AG04449 (cell line): ENCODE measurements at regions of chr1 and their contacts with region 1.

Region 1: GRCh38 chr1:52296345-52296744 is 69.7 kb downstream of the CC2D1B start:
- DNase-seq: peak; percentile 12
- H3K4me3 ChIP-seq: no peak overlapping the region
- CTCF ChIP-seq: peak; percentile 59

Region 2: GRCh38 chr1:52141513-52142219 is 154.7 kb before region 1 on chr1 and contains the start of gene ZFYVE9:
- CTCF ChIA-PET with region 1: interaction called, 28 read pairs
- POLR2A ChIA-PET with region 1: no interaction called
- DNase-seq: no peak
- H3K4me3 ChIP-seq: peak within 1 kb of the TSS; percentile 79
- CTCF ChIP-seq: peak; percentile 79

Region 3: DNA sequence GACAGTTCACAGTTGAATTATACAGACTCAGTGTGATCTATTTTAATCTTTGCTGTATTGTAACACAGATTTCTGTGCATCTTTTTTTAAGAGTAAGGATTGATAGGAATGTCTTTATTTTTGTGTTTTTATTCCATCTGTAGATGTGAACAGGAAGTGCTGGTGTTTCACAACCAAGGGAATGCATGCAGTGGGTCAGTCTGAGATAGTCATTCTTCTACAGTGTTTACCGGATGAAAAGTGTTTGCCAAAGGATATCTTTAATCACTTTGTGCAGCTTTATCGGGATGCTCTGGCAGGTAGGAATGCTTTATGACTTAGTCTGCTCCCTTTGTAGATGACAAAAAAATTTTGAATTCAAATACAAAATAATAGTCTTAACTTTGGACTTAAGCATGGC is 14.8 kb before region 1 on chr1:
- CTCF ChIA-PET with region 1: interaction called, 16 read pairs
- POLR2A ChIA-PET with region 1: no interaction called
- DNase-seq: no peak
- H3K4me3 ChIP-seq: no peak overlapping the region
- CTCF ChIP-seq: no peak

Region 4: GRCh38 chr1:52306227-52307006 is 10.1 kb after region 1 on chr1:
- CTCF ChIA-PET with region 1: interaction called, 20 read pairs
- POLR2A ChIA-PET with region 1: no interaction called
- DNase-seq: no peak
- H3K4me3 ChIP-seq: no peak overlapping the region
- CTCF ChIP-seq: no peak